Gastrocnemius medialis (tissue), 4 donors: ENCODE measurements at regions of chr9 and their contacts with region 1.

Region 1: DNA sequence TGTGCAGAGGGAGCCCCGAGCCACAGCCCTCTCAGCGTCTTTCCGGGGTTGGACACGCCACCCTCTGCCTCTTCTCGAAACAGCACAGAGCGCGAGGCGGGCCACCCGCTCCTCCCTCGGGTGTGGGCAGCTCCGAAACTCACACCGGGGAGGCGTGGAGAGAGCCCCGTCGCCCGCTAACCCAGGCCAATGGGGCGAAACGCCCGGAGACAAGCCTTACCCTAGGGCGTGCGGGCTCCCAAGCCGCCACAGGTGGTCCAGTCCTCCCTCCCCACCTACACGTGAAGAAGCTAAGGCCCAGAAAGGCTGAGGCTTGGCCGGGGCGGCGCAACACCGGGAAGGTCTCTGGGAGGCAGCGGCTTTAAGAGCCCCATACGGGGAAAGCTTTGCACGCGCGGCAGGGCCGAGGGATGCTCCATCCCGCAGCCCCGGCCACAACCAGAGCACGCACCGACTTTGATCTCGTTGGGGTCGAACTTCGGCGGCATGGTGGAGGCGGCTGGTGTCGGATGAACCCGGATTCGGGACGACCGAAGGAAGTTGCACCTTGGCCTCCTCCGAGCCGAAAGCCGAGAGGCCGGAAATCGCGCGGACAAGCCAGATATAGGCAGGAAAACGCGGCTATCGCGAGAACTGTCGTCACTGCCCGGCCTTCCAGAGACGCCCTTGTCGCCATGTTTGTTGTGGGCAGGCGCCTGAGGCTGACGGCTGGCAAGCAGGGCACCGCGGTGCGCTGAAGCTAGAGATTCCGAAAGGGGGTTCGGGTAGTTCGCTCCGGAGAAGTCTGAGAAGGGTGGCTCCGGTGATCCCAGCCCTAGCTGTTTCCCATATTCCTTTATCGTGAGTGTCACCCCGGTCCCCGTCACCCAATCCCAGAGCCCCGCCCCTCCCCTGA is at the starts of genes LRSAM1 and RPL12:
- DNase-seq: peak; percentile 94
- ATAC-seq: peak; percentile 86
- H3K4me3 ChIP-seq: peak within 1 kb of the TSS; percentile 76 to 97 (median 88)
- H3K27ac ChIP-seq: peak within 1 kb of the TSS; percentile 93 to 97 (median 94)
- H3K4me1 ChIP-seq: peaks cover 37 to 48% of the 10 kb centered on the region in 2 donors
- H3K27me3 ChIP-seq: no peaks in the 10 kb centered on the region
- CTCF ChIP-seq: no peak
- POLR2A ChIP-seq: peak; percentile 99 to 100
- total RNA-seq, gene LRSAM1: 10.2 to 17.3 (median 16.1) TPM
- total RNA-seq, gene RPL12: 1,654 to 2,251 (median 1,749) TPM

Region 2: DNA sequence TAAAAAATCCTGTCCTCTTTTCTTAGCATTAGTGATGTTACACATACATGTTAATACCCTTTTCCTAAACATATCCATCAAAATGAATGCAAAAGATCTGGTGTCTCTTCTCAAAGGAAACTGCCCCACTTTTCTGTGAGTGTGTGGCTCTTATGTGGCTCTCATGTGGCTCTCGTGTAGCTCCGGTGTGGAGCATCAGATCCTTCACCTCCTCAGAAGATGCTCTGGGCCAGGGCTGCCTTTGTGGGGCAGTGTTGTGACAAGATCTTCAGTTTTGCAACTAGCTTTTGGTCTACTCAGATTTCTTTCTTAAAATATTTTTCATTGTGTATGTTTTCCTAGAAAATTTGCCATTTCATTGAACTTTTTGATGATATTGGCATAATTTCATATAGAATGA is 167.2 kb before region 1 on chr9:
- in situ Hi-C with region 1: no loop called
- intact Hi-C with region 1: loop called (anchors 10 kb)
- DNase-seq: peak; percentile 31 to 47
- ATAC-seq: peak; percentile 51 to 74
- H3K4me3 ChIP-seq: no peak overlapping the region
- H3K27ac ChIP-seq: no peak overlapping the region
- H3K4me1 ChIP-seq: no peaks in the 10 kb centered on the region
- H3K27me3 ChIP-seq: no peaks in the 10 kb centered on the region
- CTCF ChIP-seq: peak in 2 of 5 experiments; percentile 42 to 43
- POLR2A ChIP-seq: no peak

Region 3: GRCh38 chr9:127423934-127424675 is 27.0 kb before region 1 on chr9 and contains the start of gene ZNF79:
- in situ Hi-C with region 1: no loop called
- intact Hi-C with region 1: loop called (anchors 1 kb)
- DNase-seq: peak; percentile 85 to 93
- ATAC-seq: peak; percentile 92 to 94
- H3K4me3 ChIP-seq: peak within 1 kb of the TSS; percentile 84 to 98 (median 92)
- H3K27ac ChIP-seq: peak within 1 kb of the TSS; percentile 91 to 97 (median 95)
- H3K4me1 ChIP-seq: peaks cover 34 to 36% of the 10 kb centered on the region in 2 donors
- H3K27me3 ChIP-seq: no peaks in the 10 kb centered on the region
- CTCF ChIP-seq: no peak
- POLR2A ChIP-seq: peak; percentile 71 to 79
- total RNA-seq, gene ZNF79: 3.9 to 9.3 (median 6.4) TPM

Region 4: GRCh38 chr9:127664667-127665507 is 213.8 kb after region 1 on chr9:
- in situ Hi-C with region 1: no loop called
- intact Hi-C with region 1: no loop called
- DNase-seq: no peak
- ATAC-seq: no peak
- H3K4me3 ChIP-seq: no peak overlapping the region
- H3K27ac ChIP-seq: no peak overlapping the region
- H3K4me1 ChIP-seq: no peaks in the 10 kb centered on the region
- H3K27me3 ChIP-seq: no peaks in the 10 kb centered on the region
- CTCF ChIP-seq: no peak
- POLR2A ChIP-seq: no peak

Region 5: GRCh38 chr9:127899128-127899946 is 448.3 kb after region 1 on chr9 and contains the start of gene ST6GALNAC6:
- in situ Hi-C with region 1: no loop called
- intact Hi-C with region 1: loop called (anchors 5 kb)
- DNase-seq: peak in 1 of 2 donors; percentile 64
- ATAC-seq: peak; percentile 68 to 72
- H3K4me3 ChIP-seq: peak within 1 kb of the TSS; percentile 89 to 94 (median 90)
- H3K27ac ChIP-seq: peak within 1 kb of the TSS; percentile 90 to 97 (median 93)
- H3K4me1 ChIP-seq: peaks cover 30 to 45% of the 10 kb centered on the region in 2 donors
- H3K27me3 ChIP-seq: no peaks in the 10 kb centered on the region
- CTCF ChIP-seq: peak in 1 of 5 experiments; percentile 13
- POLR2A ChIP-seq: peak; percentile 69 to 79
- total RNA-seq, gene ST6GALNAC6: 46.7 to 69.3 (median 56.9) TPM